MCF 10A (cell line): ENCODE measurements at regions of chr17 and their contacts with region 1.

Region 1: GRCh38 chr17:79777894-79778503 is at the start of gene CBX2:
- DNase-seq: peak; percentile 68
- H3K4me3 Mint-ChIP-seq: peak within 1 kb of the TSS; percentile 76
- H3K27ac Mint-ChIP-seq: no peak within 1 kb of the TSS
- H3K4me1 Mint-ChIP-seq: peaks cover 7% of the 10 kb centered on the region
- H3K27me3 Mint-ChIP-seq: peaks cover 21% of the 10 kb centered on the region
- CTCF ChIP-seq: no peak
- total RNA-seq, gene CBX2: 3.8 and 3.9 TPM in 2 replicates

Region 2: GRCh38 chr17:79741751-79742588 is 36.0 kb before region 1 on chr17:
- CTCF ChIA-PET with region 1: interaction called, 9 read pairs
- POLR2A ChIA-PET with region 1: no interaction called
- intact Hi-C with region 1: loop called (anchors 2 kb)
- DNase-seq: peak; percentile 57
- H3K4me3 Mint-ChIP-seq: no peak overlapping the region
- H3K27ac Mint-ChIP-seq: no peak overlapping the region
- H3K4me1 Mint-ChIP-seq: peaks cover 10% of the 10 kb centered on the region
- H3K27me3 Mint-ChIP-seq: peaks cover 26% of the 10 kb centered on the region
- CTCF ChIP-seq: peak; percentile 95

Region 3: GRCh38 chr17:79757140-79757745 is 20.8 kb before region 1 on chr17:
- CTCF ChIA-PET with region 1: no interaction called
- POLR2A ChIA-PET with region 1: no interaction called
- intact Hi-C with region 1: no loop called
- DNase-seq: no peak
- H3K4me3 Mint-ChIP-seq: no peak overlapping the region
- H3K27ac Mint-ChIP-seq: no peak overlapping the region
- H3K4me1 Mint-ChIP-seq: no peaks in the 10 kb centered on the region
- H3K27me3 Mint-ChIP-seq: no peaks in the 10 kb centered on the region
- CTCF ChIP-seq: no peak

Region 4: GRCh38 chr17:79796763-79797491 is 18.9 kb after region 1 on chr17 and contains the start of gene CBX8:
- CTCF ChIA-PET with region 1: no interaction called
- POLR2A ChIA-PET with region 1: interaction called, 17 read pairs
- intact Hi-C with region 1: no loop called
- DNase-seq: peak; percentile 99
- H3K4me3 Mint-ChIP-seq: peak within 1 kb of the TSS; percentile 81
- H3K27ac Mint-ChIP-seq: peak within 1 kb of the TSS; percentile 88
- H3K4me1 Mint-ChIP-seq: peaks cover 15% of the 10 kb centered on the region
- H3K27me3 Mint-ChIP-seq: peaks cover 26% of the 10 kb centered on the region
- CTCF ChIP-seq: no peak
- total RNA-seq, gene CBX8: 9.4 and 10.5 TPM in 2 replicates